Cardiac septum (tissue), 1 donor: ENCODE measurements at regions of chr14 and their contacts with region 1.

Region 1: DNA sequence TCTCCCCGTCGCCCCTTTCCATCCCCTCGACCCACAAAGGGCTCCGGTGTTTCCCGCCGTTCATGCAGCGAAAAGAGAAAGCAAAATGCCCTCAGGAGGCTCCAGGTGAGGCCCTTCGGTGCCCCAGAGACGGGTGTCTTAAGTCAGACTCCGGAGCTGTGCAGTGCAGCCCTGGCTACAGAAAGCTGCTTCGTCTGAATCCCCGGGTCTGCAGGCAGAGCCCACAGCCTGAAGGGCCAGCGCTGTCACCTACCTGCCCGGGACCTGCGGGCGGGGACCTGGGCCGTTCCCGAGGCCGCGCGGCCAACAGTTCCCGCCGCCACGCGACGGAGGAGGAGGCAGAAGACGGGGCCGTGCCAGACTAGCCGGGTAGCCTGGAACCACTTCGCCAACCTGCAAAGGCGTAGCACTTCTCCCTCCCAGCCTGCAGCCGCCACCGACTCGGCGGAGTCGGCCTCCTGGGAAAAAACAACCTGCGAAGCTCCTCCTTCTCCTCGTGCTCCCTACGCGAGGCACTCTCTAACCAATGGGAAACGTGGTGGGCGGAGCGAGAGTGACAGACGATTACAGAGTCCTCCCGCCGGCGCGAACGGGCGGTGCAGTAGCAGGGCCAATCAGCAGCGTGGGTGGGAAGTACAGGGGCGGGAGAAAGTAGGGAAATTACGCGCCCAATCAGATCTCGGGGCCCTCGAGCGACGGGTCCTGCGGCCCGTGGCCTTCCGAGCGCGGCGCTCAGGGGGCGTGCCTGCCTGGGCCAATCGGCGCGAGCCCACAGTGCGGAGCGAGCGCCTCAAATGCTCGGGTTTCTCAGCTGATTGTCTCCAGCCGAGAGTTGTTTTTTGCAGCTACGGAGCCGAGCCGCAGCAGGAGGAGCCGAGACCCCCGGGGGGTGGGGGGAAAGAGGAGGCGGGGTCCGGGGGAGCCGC is at the starts of genes GPR137C and TXNDC16:
- DNase-seq: peak; percentile 100
- total RNA-seq, gene GPR137C: 1.5 TPM
- total RNA-seq, gene TXNDC16: 3.4 TPM

Region 2: GRCh38 chr14:52380294-52380693 is 172.0 kb before region 1 on chr14:
- intact Hi-C with region 1: no loop called
- DNase-seq: no peak

Region 3: DNA sequence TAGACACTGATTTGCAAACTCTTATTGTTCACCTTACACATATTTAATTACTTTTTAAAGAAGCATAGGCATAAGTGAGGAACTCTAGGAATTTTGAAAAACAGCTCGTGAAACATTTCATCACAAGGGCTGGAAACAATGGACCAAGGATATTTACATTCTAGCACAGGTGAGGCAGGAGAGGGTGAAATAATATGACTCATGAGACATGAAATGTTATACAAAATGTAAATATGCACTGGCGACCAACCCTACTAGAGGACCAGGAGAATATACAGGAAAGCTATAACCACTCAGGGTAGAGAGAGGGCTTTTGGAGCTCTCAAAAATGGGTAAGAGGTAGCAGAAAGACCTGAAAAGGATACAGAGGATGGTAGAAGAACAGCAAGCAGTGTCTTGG is 122.9 kb before region 1 on chr14:
- intact Hi-C with region 1: no loop called
- DNase-seq: no peak

Region 4: GRCh38 chr14:52494444-52494843 is 57.9 kb before region 1 on chr14:
- intact Hi-C with region 1: no loop called
- DNase-seq: no peak

Region 5: GRCh38 chr14:52695481-52696091 is 143.3 kb after region 1 on chr14 and contains the start of gene ERO1A:
- intact Hi-C with region 1: loop called (anchors 5 kb)
- DNase-seq: peak; percentile 93
- total RNA-seq, gene ERO1A: 17.1 TPM

Region 6: DNA sequence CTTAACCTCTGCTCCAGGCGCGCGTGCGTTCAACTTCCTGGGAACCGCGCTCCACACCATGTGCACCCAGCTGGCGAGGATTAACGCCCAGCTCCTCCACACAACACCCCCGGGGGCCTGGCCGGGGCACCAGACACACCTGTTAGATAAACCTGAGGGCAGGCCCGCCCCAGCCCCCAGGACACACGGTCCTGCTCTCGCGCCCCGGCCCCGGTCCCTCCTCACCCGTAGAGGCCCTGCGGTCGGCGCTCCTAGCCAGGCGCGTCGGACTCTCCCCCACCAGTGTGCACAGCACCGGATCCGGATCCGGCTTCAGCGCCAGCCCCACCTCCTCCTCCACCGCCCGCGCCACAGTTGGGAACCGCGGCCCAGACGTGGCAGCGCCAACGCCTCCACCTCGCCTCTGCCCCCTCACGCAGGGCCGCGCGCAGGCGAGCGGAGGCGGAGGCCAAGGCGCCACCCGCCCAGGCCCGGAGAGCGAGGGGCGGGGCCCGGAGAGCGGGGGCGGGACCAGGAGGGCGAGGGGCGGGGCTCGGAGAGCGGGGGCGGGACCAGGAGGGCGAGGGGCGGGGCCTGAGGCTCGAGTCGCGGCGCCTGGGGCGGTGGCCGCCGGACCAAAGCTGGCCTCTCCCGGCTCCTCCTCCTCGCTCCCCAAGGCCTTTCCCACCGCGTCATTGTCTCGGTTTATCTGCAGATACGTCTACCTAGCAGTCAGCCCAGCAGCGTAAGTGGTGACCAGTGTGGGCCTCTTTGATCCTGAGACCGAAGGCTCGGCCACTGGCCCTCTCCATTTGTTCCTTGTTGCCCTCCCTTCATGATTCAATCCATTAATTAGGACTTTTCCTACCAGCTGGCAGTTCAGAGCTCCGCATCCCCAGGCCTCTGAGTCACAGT is 239.1 kb after region 1 on chr14 and contains the start of gene GNPNAT1:
- intact Hi-C with region 1: loop called (anchors 5 kb)
- DNase-seq: peak; percentile 92
- total RNA-seq, gene GNPNAT1: 7.7 TPM